ENCODE measurements at regions of chr6 and their contacts with region 1.

Region 1: DNA sequence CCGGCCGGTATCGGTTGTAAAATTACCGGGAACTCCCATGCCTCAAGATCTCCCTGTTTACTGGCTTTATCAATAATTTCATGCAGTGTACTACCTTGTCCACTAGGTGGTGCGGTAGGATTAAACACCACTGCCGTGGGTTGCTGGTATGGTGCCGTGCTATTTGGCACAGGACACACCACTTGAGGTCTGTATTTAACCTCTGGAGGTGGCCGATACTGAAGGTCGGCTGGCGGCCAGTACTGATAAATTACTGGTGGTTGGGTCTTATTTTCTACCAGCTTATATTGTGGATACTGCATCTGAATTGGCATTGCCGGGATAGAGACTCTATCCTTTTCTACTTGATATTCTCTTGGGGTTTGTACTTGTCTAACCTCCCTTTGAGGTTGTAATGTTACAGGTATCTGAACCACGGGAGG is 14.3 kb upstream of the PTCRA start:
- DNase-seq: peak; percentile 69 to 80
- H3K4me3 ChIP-seq: no peak overlapping the region
- H3K27ac ChIP-seq: no peak overlapping the region
- H3K4me1 ChIP-seq: peaks cover 0 to 24% (median 15%) of the 10 kb centered on the region in 4 donors
- H3K27me3 ChIP-seq: no peaks in the 10 kb centered on the region
- CTCF ChIP-seq: peak; percentile 85 to 91

Region 2: GRCh38 chr6:42978839-42979522 is 77.4 kb after region 1 on chr6 and contains the start of gene PEX6:
- intact Hi-C with region 1: loop called (anchors 10 kb)
- DNase-seq: peak; percentile 81 to 94
- H3K4me3 ChIP-seq: peak within 1 kb of the TSS; percentile 82 to 91
- H3K27ac ChIP-seq: peak within 1 kb of the TSS; percentile 86 to 87
- H3K4me1 ChIP-seq: peaks cover 0 to 49% (median 28%) of the 10 kb centered on the region in 4 donors
- H3K27me3 ChIP-seq: no peaks in the 10 kb centered on the region
- CTCF ChIP-seq: no peak

Region 3: DNA sequence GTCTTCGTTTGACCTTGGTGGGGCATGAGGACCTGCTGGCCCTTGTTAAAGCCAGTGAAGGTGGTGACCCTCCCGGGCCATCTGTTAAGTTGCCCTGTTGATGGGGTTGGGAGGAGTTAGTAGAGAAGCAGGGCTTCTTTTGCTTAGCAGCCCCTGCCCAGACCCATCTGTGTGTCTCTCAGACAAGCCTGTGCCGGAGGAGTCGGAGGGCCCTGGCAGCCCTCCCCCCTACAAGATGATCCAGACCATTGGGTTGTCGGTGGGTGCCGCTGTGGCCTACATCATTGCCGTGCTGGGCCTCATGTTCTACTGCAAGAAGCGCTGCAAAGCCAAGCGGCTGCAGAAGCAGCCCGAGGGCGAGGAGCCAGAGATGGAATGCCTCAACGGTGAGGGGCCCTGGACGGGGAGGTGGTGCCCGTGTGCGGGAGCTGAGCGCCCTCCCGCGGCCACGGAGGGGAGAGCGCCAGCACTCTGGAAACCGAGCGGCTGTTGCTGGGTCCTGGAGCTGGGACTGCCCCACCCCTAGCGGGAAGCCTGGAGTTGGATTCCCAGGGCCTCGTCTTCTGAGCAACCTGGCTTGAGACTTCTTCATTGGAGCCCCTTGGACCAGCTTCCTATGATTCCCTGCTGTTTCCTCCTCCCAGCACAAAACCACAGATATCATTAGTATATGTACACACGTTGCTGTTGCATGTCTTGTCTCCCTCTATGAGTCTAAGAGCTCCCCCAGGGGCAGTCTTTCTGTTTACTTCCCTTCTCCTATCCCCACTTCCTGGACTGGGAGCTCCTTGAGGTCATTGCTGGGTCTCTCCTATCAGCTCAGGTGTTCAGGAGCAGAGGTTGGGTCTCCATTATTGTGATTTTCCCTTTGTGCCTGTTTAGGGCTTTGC is 241.9 kb after region 1 on chr6:
- intact Hi-C with region 1: loop called (anchors 2 kb)
- DNase-seq: peak; percentile 79 to 91
- H3K4me3 ChIP-seq: no peak overlapping the region
- H3K27ac ChIP-seq: peak overlapping the region; percentile 39 to 41
- H3K4me1 ChIP-seq: peaks cover 0 to 11% (median 5%) of the 10 kb centered on the region in 4 donors
- H3K27me3 ChIP-seq: no peaks in the 10 kb centered on the region
- CTCF ChIP-seq: peak; percentile 93 to 96

Measured in tibial artery (tissue), 4 donors.